ENCODE measurements at regions of chr6 and their contacts with region 1.

Region 1: GRCh38 chr6:149903938-149904611 is 6.2 kb upstream of the RAET1E start:
- DNase-seq: no peak
- H3K4me3 ChIP-seq: no peak overlapping the region
- H3K27ac ChIP-seq: no peak overlapping the region
- H3K4me1 ChIP-seq: no peaks in the 10 kb centered on the region
- H3K27me3 ChIP-seq: no peaks in the 10 kb centered on the region
- CTCF ChIP-seq: peak in 1 of 3 experiments; percentile 14; a peak in 1 of 4 replicates
- EP300 ChIP-seq: no peak
- POLR2A ChIP-seq: no peak
- RAD21 ChIP-seq: no peak

Region 2: DNA sequence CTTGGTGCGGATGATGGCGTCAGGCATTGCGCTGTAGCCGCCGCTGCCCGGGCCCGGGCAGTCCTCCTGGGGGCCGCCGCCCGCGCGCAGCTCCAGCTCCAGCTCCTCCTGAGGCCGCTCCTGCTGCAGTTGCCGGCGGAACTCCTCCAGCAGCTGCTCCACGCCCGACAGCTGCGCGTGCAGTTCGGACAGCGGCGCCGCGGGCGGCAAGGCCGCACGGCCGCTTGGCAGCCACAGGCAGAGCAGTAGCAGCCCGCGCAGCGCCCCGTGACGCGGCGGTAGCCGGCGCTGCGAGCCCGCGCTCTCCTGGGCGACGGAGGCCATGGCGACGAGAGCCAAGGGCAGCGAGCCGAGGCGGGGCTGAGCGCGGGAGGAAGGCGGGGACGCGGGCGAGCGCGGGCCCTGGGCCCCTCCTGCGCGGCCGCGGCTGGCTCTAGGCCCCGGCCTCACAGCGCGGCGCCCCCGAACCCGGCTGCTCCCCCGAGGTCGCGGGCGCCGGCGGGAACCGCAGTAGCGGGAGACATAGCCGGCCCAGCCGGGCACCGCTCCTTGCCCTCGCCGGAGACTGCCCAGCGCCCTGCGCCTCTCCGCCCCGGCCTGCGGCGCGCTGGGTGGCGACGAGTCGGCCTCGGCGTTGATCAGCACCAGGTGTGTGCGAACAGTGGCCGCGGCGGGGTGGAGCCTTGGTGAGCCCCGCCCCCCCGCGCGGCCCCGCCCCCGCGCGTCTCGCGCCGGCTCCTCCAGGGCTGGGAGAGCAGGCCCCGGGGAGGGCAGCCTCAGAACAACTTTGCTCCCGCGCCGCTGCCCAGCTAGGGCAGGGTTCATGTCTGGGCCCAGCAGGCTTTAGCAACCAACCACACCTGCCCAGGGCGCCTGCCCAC is 40.1 kb before region 1 on chr6 and contains the start of gene LRP11:
- CTCF ChIA-PET with region 1: interaction called, 11 read pairs
- POLR2A ChIA-PET with region 1: no interaction called
- DNase-seq: peak; percentile 66 to 93
- H3K4me3 ChIP-seq: peak within 1 kb of the TSS; percentile 48 to 80 (median 74)
- H3K27ac ChIP-seq: peak within 1 kb of the TSS; percentile 84
- H3K4me1 ChIP-seq: peaks cover 5 to 20% (median 11%) of the 10 kb centered on the region in 4 experiments
- H3K27me3 ChIP-seq: peaks cover 0 to 13% (median 5%) of the 10 kb centered on the region in 4 experiments; a peak in 5 of 7 replicates
- CTCF ChIP-seq: no peak
- EP300 ChIP-seq: no peak
- POLR2A ChIP-seq: peak; percentile 33 to 78
- RAD21 ChIP-seq: no peak
- total RNA-seq, gene LRP11: 20.0 TPM in 2 replicates

Region 3: DNA sequence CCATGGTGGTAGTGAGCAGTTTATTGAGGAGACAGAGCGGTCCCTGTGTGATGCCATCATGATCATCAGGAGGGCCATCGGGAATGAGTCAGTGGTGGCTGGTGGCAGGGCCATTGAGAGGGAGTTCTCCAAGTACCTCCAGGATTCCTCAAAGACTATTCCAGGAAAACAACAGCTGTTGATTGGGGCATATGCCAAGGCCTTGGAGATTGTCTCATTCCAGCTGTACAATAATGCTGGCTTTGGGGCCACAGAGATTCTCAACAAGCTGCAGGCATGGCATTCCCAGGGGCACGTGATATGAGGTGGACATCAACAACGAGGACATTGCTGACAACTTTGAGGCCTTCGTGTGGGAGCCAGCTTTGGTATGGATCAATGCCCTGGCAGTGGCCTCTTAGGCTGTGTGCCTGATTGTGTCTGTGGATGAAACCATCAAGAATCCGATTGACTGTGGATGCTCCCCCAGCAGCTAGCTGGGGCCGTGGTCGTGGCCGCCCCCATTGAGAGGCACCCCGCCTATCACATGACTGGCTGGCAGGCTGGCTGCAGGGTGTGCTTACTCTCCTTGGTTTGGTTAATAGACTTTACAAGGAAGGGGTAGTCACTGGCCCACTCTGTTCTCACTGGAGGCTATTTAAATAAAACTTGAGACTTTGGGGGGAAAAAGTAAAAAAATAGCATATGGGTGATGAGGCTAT is 22.9 kb before region 1 on chr6:
- CTCF ChIA-PET with region 1: interaction called, 11 read pairs
- POLR2A ChIA-PET with region 1: interaction called, 3 read pairs
- DNase-seq: no peak
- H3K4me3 ChIP-seq: no peak overlapping the region
- H3K27ac ChIP-seq: no peak overlapping the region
- H3K4me1 ChIP-seq: no peaks in the 10 kb centered on the region; a peak in 1 of 7 replicates
- H3K27me3 ChIP-seq: peaks cover 0 to 3% (median 0%) of the 10 kb centered on the region in 4 experiments; a peak in 3 of 7 replicates
- CTCF ChIP-seq: no peak
- EP300 ChIP-seq: no peak
- POLR2A ChIP-seq: no peak
- RAD21 ChIP-seq: no peak